ENCODE measurements at regions of chr4 and their contacts with region 1.

Region 1: DNA sequence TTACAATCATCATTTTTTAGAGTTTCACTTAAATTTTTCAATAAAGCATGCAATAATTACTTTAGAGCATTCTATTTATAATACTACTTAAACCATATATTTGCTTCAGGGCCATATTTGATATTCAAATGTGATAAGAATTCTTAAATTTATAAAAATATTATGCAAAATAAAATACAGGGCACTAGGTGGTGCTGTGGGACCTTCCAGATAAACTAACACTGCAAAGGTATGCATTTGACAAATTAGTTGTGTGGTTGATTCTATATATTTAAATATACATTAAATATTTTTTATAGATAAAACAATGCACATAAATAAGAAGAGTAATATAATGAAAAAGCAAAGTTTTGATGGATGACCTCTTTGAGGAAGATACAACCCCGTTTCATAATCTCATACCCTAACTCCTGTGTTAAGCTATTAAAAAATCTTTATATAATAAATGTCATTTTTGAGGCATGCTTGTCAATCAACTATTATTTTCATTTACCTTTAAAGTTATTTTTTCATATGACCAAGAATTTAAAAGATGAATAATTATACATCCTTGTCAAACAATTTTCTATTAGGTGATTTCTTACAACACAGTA is 128.4 kb downstream of the REELD1 start:
- DNase-seq: peak; percentile 20 to 54 (median 26)
- ATAC-seq: peak; percentile 48; the same call in 2 of the 3 replicates
- H3K4me3 ChIP-seq: no peak overlapping the region
- H3K27ac ChIP-seq: no peak overlapping the region
- H3K4me1 ChIP-seq: peaks cover 0 to 3% of the 10 kb centered on the region in 2 experiments; a peak in 1 of 5 replicates
- H3K27me3 ChIP-seq: no peaks in the 10 kb centered on the region
- CTCF ChIP-seq: peak in 2 of 3 experiments; percentile 36 to 74; a peak in 3 of 6 replicates
- EP300 ChIP-seq: no peak
- POLR2A ChIP-seq: no peak
- RAD21 ChIP-seq: peak; percentile 50 to 72

Region 2: GRCh38 chr4:146243141-146243882 is 99.4 kb before region 1 on chr4:
- CTCF ChIA-PET with region 1: no interaction called
- POLR2A ChIA-PET with region 1: no interaction called
- in situ Hi-C with region 1: no loop called
- intact Hi-C with region 1: loop called (anchors 2 kb)
- DNase-seq: peak; percentile 37 to 72 (median 62)
- ATAC-seq: peak; percentile 84
- H3K4me3 ChIP-seq: no peak overlapping the region
- H3K27ac ChIP-seq: no peak overlapping the region
- H3K4me1 ChIP-seq: peaks cover 0 to 7% of the 10 kb centered on the region in 2 experiments; a peak in 1 of 5 replicates
- H3K27me3 ChIP-seq: peaks cover 0 to 32% of the 10 kb centered on the region in 2 experiments; a peak in 2 of 5 replicates
- CTCF ChIP-seq: peak; percentile 44 to 67 (median 59)
- EP300 ChIP-seq: no peak
- POLR2A ChIP-seq: no peak
- RAD21 ChIP-seq: 0 out of 4 replicates have a peak, but pooled peaks of 1 of the 2 experiments have one; percentile 12

Region 3: GRCh38 chr4:146522098-146522868 is 179.6 kb after region 1 on chr4:
- CTCF ChIA-PET with region 1: no interaction called
- POLR2A ChIA-PET with region 1: no interaction called
- in situ Hi-C with region 1: no loop called
- intact Hi-C with region 1: loop called (anchors 5 kb)
- DNase-seq: peak; percentile 82 to 92 (median 86)
- ATAC-seq: peak; percentile 84
- H3K4me3 ChIP-seq: peak overlapping the region; percentile 85
- H3K27ac ChIP-seq: peak overlapping the region; percentile 95
- H3K4me1 ChIP-seq: peaks cover 16 to 18% of the 10 kb centered on the region in 2 experiments; a peak in 4 of 5 replicates
- H3K27me3 ChIP-seq: no peaks in the 10 kb centered on the region
- CTCF ChIP-seq: no peak
- EP300 ChIP-seq: no peak
- POLR2A ChIP-seq: peak; percentile 69
- RAD21 ChIP-seq: no peak

Region 4: DNA sequence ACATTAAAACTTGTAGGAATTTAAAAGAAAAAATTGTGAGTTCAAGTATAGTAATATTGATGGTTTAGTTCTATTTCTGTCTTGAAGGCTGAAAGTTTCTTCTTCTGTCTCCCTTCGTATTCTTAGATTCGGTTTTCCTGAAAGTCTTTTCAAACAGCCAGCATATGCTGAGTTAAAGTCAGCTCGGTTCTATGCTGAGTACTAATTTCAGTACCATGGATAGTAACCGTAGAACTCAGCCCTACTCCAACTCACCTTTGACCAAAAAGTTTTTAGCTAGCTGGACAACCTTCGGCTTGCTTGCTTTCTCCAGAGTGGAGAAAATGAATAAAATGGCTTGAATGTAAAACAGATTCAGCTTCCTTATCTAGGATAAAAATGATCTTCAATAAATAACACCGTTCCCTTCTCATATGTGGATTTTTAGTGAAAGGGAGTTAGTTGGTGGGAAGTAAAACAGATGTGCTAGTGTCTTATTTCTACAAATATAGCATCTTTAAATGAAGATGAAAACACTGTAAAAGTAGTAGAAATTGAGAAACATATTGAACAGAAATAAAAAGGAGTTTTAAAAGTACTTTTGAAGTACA is 301.2 kb after region 1 on chr4:
- CTCF ChIA-PET with region 1: no interaction called
- POLR2A ChIA-PET with region 1: no interaction called
- in situ Hi-C with region 1: no loop called
- intact Hi-C with region 1: loop called (anchors 10 kb)
- DNase-seq: peak in 2 of 4 experiments; percentile 12 to 39
- ATAC-seq: peak; percentile 70
- H3K4me3 ChIP-seq: no peak overlapping the region
- H3K27ac ChIP-seq: no peak overlapping the region
- H3K4me1 ChIP-seq: no peaks in the 10 kb centered on the region; a peak in 1 of 5 replicates
- H3K27me3 ChIP-seq: peaks cover 0 to 21% of the 10 kb centered on the region in 2 experiments; a peak in 2 of 5 replicates
- CTCF ChIP-seq: no peak
- EP300 ChIP-seq: no peak
- POLR2A ChIP-seq: no peak
- RAD21 ChIP-seq: no peak

Region 5: GRCh38 chr4:147096667-147097604 is 754.2 kb after region 1 on chr4:
- CTCF ChIA-PET with region 1: interaction called, 5 read pairs
- POLR2A ChIA-PET with region 1: no interaction called
- in situ Hi-C with region 1: no loop called
- intact Hi-C with region 1: loop called (anchors 5 kb)
- DNase-seq: peak; percentile 33 to 47 (median 42)
- ATAC-seq: peak; percentile 65; the same call in 2 of the 3 replicates
- H3K4me3 ChIP-seq: no peak overlapping the region
- H3K27ac ChIP-seq: no peak overlapping the region
- H3K4me1 ChIP-seq: no peaks in the 10 kb centered on the region
- H3K27me3 ChIP-seq: no peaks in the 10 kb centered on the region
- CTCF ChIP-seq: peak; percentile 22 to 63 (median 38); a peak in 3 of 6 replicates
- EP300 ChIP-seq: no peak
- POLR2A ChIP-seq: no peak
- RAD21 ChIP-seq: peak; percentile 50 to 60; a peak in 3 of 4 replicates

Measured in K562 (cell line).